ENCODE measurements at regions of chr4 and their contacts with region 1.

Region 1: GRCh38 chr4:88672987-88673386 is 24.6 kb downstream of the NAP1L5 start:
- DNase-seq: no peak
- H3K4me3 ChIP-seq: no peak overlapping the region
- H3K27ac ChIP-seq: no peak overlapping the region
- H3K27me3 ChIP-seq: no peaks in the 10 kb centered on the region
- CTCF ChIP-seq: peak; percentile 76

Region 2: DNA sequence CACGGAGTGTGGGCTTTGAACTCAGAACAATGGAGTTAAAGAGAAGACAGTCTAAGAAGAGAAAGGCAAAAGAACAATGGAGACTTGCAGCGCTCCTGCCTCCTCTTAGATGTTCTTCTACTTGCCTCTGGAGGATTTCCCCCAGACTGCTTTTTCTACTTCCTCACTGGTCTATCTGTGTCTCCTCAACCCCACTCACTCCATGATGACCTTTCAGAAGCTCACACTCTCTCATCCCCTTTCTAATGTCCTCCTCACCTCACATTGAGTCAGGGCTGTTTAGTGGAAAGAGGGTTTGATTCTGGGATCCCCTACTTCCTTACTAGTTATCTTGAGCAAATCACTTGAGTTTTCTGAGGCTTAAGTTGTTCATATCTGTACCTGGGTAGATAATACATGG is 306.5 kb before region 1 on chr4:
- CTCF ChIA-PET with region 1: no interaction called
- POLR2A ChIA-PET with region 1: no interaction called
- DNase-seq: no peak
- H3K4me3 ChIP-seq: no peak overlapping the region
- H3K27ac ChIP-seq: no peak overlapping the region
- H3K27me3 ChIP-seq: no peaks in the 10 kb centered on the region
- CTCF ChIP-seq: no peak

Region 3: GRCh38 chr4:88523325-88524129 is 149.5 kb before region 1 on chr4 and contains the start of gene PYURF:
- CTCF ChIA-PET with region 1: interaction called, 11 read pairs
- POLR2A ChIA-PET with region 1: interaction called, 3 read pairs
- DNase-seq: peak; percentile 73
- H3K4me3 ChIP-seq: peak within 1 kb of the TSS; percentile 92
- H3K27ac ChIP-seq: peak within 1 kb of the TSS; percentile 66
- H3K27me3 ChIP-seq: no peaks in the 10 kb centered on the region
- CTCF ChIP-seq: no peak
- polyA plus RNA-seq, gene PYURF: 50.5 and 65.7 TPM in 2 replicates

Region 4: DNA sequence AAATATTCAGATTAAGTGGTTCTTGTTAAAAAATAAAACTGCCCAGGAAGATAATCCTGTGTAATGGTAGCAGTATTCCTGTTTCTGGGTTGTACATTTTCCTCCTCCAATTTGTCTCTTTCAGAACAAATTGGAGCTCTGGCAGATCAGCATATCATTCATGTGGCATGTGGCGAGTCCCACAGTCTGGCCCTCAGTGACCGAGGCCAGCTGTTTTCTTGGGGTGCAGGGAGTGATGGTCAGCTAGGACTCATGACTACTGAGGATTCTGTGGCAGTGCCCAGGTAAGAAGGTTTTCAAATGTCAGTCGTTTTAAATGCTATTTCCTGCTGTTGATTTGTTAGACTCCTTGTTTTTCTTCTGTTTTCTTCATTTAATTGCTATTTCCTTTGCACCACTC is 23.3 kb before region 1 on chr4:
- CTCF ChIA-PET with region 1: interaction called, 14 read pairs
- POLR2A ChIA-PET with region 1: interaction called, 3 read pairs
- DNase-seq: no peak
- H3K4me3 ChIP-seq: no peak overlapping the region
- H3K27ac ChIP-seq: no peak overlapping the region
- H3K27me3 ChIP-seq: no peaks in the 10 kb centered on the region
- CTCF ChIP-seq: no peak

Region 5: GRCh38 chr4:88690355-88690754 is 17.4 kb after region 1 on chr4:
- CTCF ChIA-PET with region 1: interaction called, 20 read pairs
- POLR2A ChIA-PET with region 1: no interaction called
- DNase-seq: no peak
- H3K4me3 ChIP-seq: no peak overlapping the region
- H3K27ac ChIP-seq: no peak overlapping the region
- H3K27me3 ChIP-seq: no peaks in the 10 kb centered on the region
- CTCF ChIP-seq: no peak

Region 6: GRCh38 chr4:88928852-88929251 is 255.9 kb after region 1 on chr4:
- CTCF ChIA-PET with region 1: no interaction called
- POLR2A ChIA-PET with region 1: no interaction called
- DNase-seq: no peak
- H3K4me3 ChIP-seq: no peak overlapping the region
- H3K27ac ChIP-seq: no peak overlapping the region
- H3K27me3 ChIP-seq: no peaks in the 10 kb centered on the region
- CTCF ChIP-seq: no peak

Measured in AG04450 (cell line).